ENCODE measurements at regions of chr7 and their contacts with region 1.

Region 1: GRCh38 chr7:39746103-39746819 is 122.9 kb downstream of the RALA start:
- DNase-seq: no peak
- H3K4me3 Mint-ChIP-seq: no peak overlapping the region
- H3K27ac Mint-ChIP-seq: no peak overlapping the region
- H3K4me1 Mint-ChIP-seq: peaks cover 8% of the 10 kb centered on the region
- H3K27me3 Mint-ChIP-seq: no peaks in the 10 kb centered on the region

Region 2: GRCh38 chr7:39144420-39144819 is 601.8 kb before region 1 on chr7:
- intact Hi-C with region 1: no loop called
- DNase-seq: no peak
- H3K4me3 Mint-ChIP-seq: no peak overlapping the region
- H3K27ac Mint-ChIP-seq: no peak overlapping the region
- H3K4me1 Mint-ChIP-seq: no peaks in the 10 kb centered on the region
- H3K27me3 Mint-ChIP-seq: no peaks in the 10 kb centered on the region

Region 3: GRCh38 chr7:39536951-39537350 is 209.3 kb before region 1 on chr7:
- intact Hi-C with region 1: no loop called
- DNase-seq: no peak
- H3K4me3 Mint-ChIP-seq: no peak overlapping the region
- H3K27ac Mint-ChIP-seq: no peak overlapping the region
- H3K4me1 Mint-ChIP-seq: no peaks in the 10 kb centered on the region
- H3K27me3 Mint-ChIP-seq: peaks cover 6% of the 10 kb centered on the region

Region 4: GRCh38 chr7:39580149-39580874 is 165.9 kb before region 1 on chr7:
- intact Hi-C with region 1: loop called (anchors 1 kb)
- DNase-seq: peak; percentile 56
- H3K4me3 Mint-ChIP-seq: no peak overlapping the region
- H3K27ac Mint-ChIP-seq: peak overlapping the region; percentile 36
- H3K4me1 Mint-ChIP-seq: peaks cover 12% of the 10 kb centered on the region
- H3K27me3 Mint-ChIP-seq: no peaks in the 10 kb centered on the region

Region 5: DNA sequence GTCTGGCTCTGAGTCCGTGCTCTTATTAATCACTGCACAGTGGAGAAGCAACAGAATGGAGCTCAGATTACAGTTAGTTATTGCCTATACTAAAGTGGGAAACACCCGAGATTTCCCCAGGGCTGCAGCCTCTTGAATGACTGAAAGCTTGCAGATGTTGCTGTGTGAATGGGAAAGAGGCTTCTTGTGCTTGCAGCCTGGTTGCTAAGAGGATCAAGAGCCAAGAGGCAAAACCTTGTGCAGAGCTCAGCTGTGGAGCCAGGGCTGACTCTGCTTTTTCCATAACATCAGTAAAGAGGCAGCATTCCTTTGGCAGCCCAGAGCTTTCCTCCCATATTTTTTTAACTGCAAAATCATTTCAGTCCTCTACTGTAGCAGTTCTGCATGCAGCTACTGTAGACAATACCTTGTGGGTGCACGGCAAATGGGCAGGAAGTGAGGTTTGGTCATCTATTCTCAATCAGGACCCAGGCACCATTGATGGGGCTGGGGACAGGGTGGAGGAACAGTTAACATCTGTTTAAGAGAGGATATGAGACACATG is 36.4 kb before region 1 on chr7:
- intact Hi-C with region 1: no loop called
- DNase-seq: no peak
- H3K4me3 Mint-ChIP-seq: no peak overlapping the region
- H3K27ac Mint-ChIP-seq: no peak overlapping the region
- H3K4me1 Mint-ChIP-seq: peaks cover 7% of the 10 kb centered on the region
- H3K27me3 Mint-ChIP-seq: no peaks in the 10 kb centered on the region

Region 6: DNA sequence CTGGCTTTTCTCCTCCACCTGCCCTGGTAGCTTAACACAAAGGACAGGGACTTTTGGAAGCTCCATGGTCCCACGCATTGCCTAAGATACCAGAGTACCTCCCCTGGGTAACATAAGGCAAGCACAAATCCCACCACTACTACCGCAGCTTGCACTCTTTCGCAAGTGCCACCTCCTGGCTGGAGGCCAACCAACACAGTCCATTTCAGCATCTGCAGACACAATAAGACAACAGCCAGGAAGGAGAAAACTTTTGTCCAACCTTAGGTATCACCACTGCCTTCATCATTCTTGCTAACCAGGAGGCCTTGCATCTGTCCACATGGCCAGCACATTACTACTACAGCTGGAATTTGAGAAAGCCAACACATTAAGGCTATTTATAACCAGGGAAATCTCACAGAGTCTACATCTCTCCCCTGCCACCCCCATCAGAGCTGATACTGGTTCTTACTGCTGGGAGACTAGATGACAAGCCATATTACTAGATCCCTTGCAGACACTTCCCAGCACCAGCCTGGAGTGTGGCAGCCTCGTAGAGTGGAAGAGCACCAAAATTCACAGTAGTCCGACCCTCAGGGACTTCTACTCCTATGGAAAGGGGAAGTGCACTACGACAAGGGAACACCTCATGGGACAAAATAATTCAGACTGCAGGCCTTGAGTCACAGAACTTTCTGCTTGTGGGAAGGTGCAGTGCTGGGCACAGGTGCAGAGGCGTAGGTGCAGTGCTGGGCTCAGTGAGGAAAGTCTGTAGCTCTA is 164.0 kb after region 1 on chr7:
- intact Hi-C with region 1: no loop called
- DNase-seq: no peak
- H3K4me3 Mint-ChIP-seq: no peak overlapping the region
- H3K27ac Mint-ChIP-seq: no peak overlapping the region
- H3K4me1 Mint-ChIP-seq: peaks cover 4% of the 10 kb centered on the region
- H3K27me3 Mint-ChIP-seq: peaks cover 4% of the 10 kb centered on the region

Measured in activated T-helper 2 cell treated with anti-CD3 and anti-CD28 coated beads, Interferon-gamma antibody, Interleukin-2, Interleukin-4, amounts not matched to agents 10 μg/mL and 5 μg/mL and 100 μg/mL, durations not matched to agents 14 hours and 24 hours and 36 hours (primary cell).